GM10248 (cell line): ENCODE measurements at regions of chr10 and their contacts with region 1.

Region 1: GRCh38 chr10:125982260-125982948 is 86.0 kb downstream of the FANK1 start:
- DNase-seq: peak; percentile 48
- CTCF ChIP-seq: peak; percentile 42

Region 2: GRCh38 chr10:125911975-125912374 is 70.4 kb before region 1 on chr10:
- CTCF ChIA-PET with region 1: no interaction called
- POLR2A ChIA-PET with region 1: no interaction called
- DNase-seq: no peak
- CTCF ChIP-seq: no peak

Region 3: DNA sequence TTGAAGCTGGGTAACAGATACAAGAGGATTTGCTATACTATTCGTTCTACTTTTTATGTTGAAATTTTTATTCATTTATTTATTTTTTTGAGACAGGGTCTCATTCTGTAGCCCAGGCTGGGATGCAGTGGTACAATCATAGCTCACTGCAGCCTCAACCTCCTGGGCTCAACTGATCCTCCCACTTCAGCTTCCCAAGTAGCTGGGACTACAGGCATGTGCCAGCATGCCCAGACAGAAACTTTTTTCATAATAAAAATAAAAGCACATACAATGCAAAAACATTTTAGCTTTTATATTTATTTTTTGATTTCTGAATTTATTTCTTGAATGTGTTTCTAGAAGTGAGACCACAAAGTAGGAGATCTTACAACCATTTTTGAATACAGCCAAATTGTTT is 14.9 kb before region 1 on chr10:
- CTCF ChIA-PET with region 1: no interaction called
- POLR2A ChIA-PET with region 1: no interaction called
- DNase-seq: no peak
- CTCF ChIP-seq: no peak

Region 4: GRCh38 chr10:126013489-126014281 is 31.3 kb after region 1 on chr10:
- CTCF ChIA-PET with region 1: interaction called, 11 read pairs
- POLR2A ChIA-PET with region 1: no interaction called
- DNase-seq: no peak
- CTCF ChIP-seq: peak; percentile 26

Region 5: GRCh38 chr10:126097558-126098225 is 115.3 kb after region 1 on chr10:
- CTCF ChIA-PET with region 1: interaction called, 10 read pairs
- POLR2A ChIA-PET with region 1: no interaction called
- DNase-seq: no peak
- CTCF ChIP-seq: no peak

Region 6: DNA sequence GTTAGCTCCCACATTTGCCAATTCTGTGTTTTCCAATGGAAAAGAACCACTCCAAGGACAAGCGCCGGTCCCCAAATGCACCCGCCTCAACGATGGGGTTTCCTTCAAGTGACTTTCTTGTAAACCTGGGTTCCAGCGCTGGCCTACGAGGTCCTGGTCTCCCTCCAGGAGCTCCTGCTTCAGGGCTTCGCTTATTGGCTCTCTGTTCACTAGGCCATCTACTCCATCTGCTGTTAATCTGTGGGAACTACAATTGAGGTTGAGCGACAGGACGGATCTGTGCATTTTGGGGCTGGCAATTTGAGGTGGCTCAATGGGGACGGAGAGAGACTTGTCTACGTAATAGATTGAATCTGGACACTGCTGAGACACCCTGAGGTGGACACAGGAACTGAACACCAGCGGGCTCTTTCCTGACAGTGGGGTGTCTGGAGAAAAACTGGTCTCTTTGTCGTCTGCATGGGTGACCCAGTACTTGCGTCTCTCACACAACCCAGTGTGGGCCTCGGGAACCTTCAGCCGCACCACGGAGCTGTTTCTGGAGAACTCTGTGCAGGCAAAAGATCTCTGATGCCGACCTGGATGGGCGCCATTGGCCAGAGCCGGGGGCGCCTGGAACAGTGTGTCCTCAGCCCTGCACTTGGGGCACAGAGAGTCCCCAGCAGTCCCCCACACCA is 521.8 kb after region 1 on chr10:
- CTCF ChIA-PET with region 1: interaction called, 13 read pairs
- POLR2A ChIA-PET with region 1: no interaction called
- DNase-seq: peak; percentile 41
- CTCF ChIP-seq: peak; percentile 37

Region 7: GRCh38 chr10:126749015-126749655 is 766.7 kb after region 1 on chr10:
- CTCF ChIA-PET with region 1: interaction called, 16 read pairs
- POLR2A ChIA-PET with region 1: no interaction called
- DNase-seq: peak; percentile 29
- CTCF ChIP-seq: peak; percentile 64